ENCODE measurements at regions of chr19 and their contacts with region 1.

Region 1: GRCh38 chr19:56140583-56141416 is at the start of gene ZNF444:
- DNase-seq: peak; percentile 97
- ATAC-seq: peak; percentile 96
- H3K4me3 ChIP-seq: peak within 1 kb of the TSS; percentile 75
- H3K27ac ChIP-seq: peak within 1 kb of the TSS; percentile 82
- H3K4me1 ChIP-seq: peaks cover 15% of the 10 kb centered on the region
- H3K27me3 ChIP-seq: no peaks in the 10 kb centered on the region
- CTCF ChIP-seq: no peak
- EP300 ChIP-seq: no peak
- POLR2A ChIP-seq: peak; percentile 76
- RAD21 ChIP-seq: no peak
- polyA plus RNA-seq, gene ZNF444: 0.45 to 0.99 TPM

Region 2: DNA sequence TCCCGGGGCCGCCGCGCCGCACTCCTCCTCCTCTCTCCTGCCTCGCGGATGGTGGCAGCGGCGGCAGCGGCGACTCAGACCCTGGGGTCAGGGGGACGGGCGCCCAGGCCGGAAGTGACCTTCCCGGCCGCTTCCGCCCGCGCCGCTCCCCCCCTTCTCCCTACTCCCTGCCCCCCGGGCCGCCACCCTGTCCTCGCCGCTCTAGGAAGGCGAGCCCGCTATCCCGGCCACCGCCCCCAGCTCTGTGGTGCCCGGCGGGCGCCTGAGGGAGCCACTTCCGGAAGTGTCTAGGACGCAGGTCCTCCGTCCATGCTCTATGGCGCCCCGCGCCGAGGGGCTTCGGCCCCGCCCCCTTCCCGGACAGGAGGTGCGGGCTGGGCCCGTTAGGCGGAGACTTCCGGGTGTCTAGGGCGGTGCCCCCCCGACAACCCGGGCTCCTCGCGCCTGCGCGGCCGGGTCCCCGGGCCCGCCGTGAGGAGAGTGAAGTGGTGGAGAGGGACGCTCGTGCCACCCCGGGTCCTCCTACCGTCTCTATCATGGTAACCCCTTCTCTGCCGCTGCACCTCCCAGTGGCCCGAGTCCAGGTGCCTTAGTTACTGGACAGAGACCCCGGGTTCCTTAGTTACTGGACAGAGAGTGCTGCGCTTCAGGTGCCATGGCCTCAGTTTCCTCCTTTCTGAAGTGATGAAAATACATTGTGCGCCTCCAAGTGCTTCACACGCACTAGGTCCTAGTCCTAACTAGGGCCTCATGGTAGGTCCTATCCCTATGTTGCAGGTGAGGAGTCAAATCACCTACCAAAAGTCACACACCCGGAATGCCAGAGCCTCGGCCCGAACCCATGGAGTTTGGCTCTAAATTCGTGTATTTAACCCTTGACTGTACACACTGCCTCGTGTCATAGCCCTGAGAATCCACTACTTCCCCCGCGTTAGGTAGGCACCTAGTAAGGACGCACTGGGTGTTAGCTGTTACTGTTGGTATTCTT is 19.3 kb before region 1 on chr19 and contains the start of gene ZNF787:
- CTCF ChIA-PET with region 1: no interaction called
- POLR2A ChIA-PET with region 1: interaction called, 29 read pairs
- RAD21 ChIA-PET with region 1: no interaction called
- SMC1A ChIA-PET with region 1: no interaction called
- in situ Hi-C with region 1: no loop called
- intact Hi-C with region 1: no loop called
- DNase-seq: peak; percentile 85
- ATAC-seq: peak; percentile 90
- H3K4me3 ChIP-seq: peak within 1 kb of the TSS; percentile 90
- H3K27ac ChIP-seq: peak within 1 kb of the TSS; percentile 92
- H3K4me1 ChIP-seq: peaks cover 14% of the 10 kb centered on the region; the same call in 1 of the 2 replicates
- H3K27me3 ChIP-seq: no peaks in the 10 kb centered on the region
- CTCF ChIP-seq: no peak
- EP300 ChIP-seq: no peak
- POLR2A ChIP-seq: peak; percentile 75
- RAD21 ChIP-seq: no peak
- polyA plus RNA-seq, gene ZNF787: 0.23 to 0.42 TPM

Region 3: DNA sequence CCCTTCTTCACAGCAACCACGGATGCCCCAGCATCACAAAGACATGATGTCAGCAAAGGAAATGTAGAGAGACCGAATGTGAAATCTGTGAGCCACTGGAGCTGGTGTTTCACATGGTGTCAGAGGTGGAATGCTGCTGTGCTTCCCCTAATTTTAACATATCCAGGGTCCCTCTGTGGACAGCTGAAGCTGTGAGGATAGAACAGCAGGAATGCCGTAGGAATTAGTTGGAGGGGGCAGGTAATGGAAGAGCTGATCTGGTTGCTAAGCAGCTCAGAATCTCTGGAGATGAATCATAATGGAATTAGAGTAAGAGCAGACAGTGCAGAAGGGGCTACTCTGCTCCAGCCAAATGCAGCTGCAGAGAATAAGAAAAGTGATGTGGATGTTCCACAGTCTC is 599.7 kb after region 1 on chr19:
- CTCF ChIA-PET with region 1: no interaction called
- POLR2A ChIA-PET with region 1: no interaction called
- RAD21 ChIA-PET with region 1: no interaction called
- SMC1A ChIA-PET with region 1: no interaction called
- in situ Hi-C with region 1: no loop called
- intact Hi-C with region 1: no loop called
- DNase-seq: no peak
- ATAC-seq: no peak
- H3K4me3 ChIP-seq: no peak overlapping the region
- H3K27ac ChIP-seq: no peak overlapping the region
- H3K4me1 ChIP-seq: no peaks in the 10 kb centered on the region
- H3K27me3 ChIP-seq: no peaks in the 10 kb centered on the region
- CTCF ChIP-seq: no peak
- EP300 ChIP-seq: no peak
- POLR2A ChIP-seq: no peak
- RAD21 ChIP-seq: no peak

Region 4: GRCh38 chr19:57819475-57820148 is 1678.8 kb after region 1 on chr19:
- CTCF ChIA-PET with region 1: no interaction called
- POLR2A ChIA-PET with region 1: no interaction called
- RAD21 ChIA-PET with region 1: no interaction called
- SMC1A ChIA-PET with region 1: no interaction called
- in situ Hi-C with region 1: loop called (anchors 25 kb)
- intact Hi-C with region 1: no loop called
- DNase-seq: peak; percentile 90
- ATAC-seq: peak; percentile 92
- H3K4me3 ChIP-seq: peak overlapping the region; percentile 90
- H3K27ac ChIP-seq: peak overlapping the region; percentile 72
- H3K4me1 ChIP-seq: peaks cover 4% of the 10 kb centered on the region; the same call in 1 of the 2 replicates
- H3K27me3 ChIP-seq: no peaks in the 10 kb centered on the region
- CTCF ChIP-seq: peak in 1 of 3 experiments; percentile 32; a peak in 1 of 6 replicates
- EP300 ChIP-seq: no peak
- POLR2A ChIP-seq: peak; percentile 93
- RAD21 ChIP-seq: 0 out of 2 replicates have a peak, but pooled peaks have one; percentile 5